ENCODE measurements at regions of chr19 and their contacts with region 1.

Region 1: DNA sequence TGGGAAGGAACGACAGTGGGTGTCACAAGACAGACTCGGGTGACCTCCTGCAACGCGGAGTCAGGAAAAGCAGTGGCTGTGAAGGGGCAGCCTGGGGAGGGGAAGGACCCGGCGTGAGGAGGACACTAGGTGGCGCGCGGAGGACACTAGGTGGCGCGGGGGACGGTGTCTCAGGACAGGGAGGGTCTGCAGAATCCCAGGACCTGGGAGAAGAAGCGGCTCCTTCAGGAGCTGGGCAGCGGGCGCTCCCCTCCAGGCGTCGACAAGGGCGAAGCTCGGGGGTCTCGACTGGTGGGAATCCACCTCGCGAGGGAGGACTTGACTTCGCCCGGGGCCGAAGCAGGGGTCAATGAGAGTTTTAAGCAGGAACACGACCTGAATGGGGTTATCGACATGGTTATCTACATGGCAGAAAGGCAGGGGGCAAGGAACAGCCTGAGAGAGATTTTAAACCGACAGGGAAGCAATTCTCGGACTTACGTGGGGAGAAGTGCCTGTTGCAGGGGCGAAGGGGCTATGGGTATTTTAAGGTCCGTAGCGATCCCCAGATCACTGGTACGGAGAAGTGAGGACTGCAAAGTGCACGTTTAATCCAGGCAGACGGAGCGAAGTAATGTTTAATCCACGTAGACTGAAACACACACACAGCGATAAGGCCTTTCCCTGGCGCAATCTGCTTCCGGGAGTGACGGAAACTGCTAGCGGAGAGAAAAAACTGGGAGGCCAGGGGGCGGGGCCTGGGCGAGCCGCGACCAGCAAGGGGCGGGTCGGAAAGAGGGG is at the start of gene ZNF616:
- DNase-seq: peak; percentile 98 to 99 (median 98)
- ATAC-seq: peak; percentile 99
- H3K4me3 ChIP-seq: peak within 1 kb of the TSS; percentile 34
- H3K4me1 ChIP-seq: peaks cover 14% of the 10 kb centered on the region
- CTCF ChIP-seq: peak; percentile 57
- total RNA-seq, gene ZNF616: 5.5 to 13.4 (median 11.1) TPM

Region 2: GRCh38 chr19:51887522-51888498 is 251.6 kb before region 1 on chr19 and contains the start of gene ZNF577:
- intact Hi-C with region 1: no loop called
- DNase-seq: peak; percentile 90 to 96 (median 91)
- ATAC-seq: peak; percentile 100
- H3K4me3 ChIP-seq: peak within 1 kb of the TSS; percentile 54
- H3K4me1 ChIP-seq: no peaks in the 10 kb centered on the region
- CTCF ChIP-seq: no peak
- total RNA-seq, gene ZNF577: 5.8 to 17.2 (median 9.7) TPM

Region 3: GRCh38 chr19:52200044-52200443 is 60.6 kb after region 1 on chr19:
- intact Hi-C with region 1: no loop called
- DNase-seq: no peak
- ATAC-seq: peak; percentile 29
- H3K4me3 ChIP-seq: no peak overlapping the region
- H3K4me1 ChIP-seq: peaks cover 7% of the 10 kb centered on the region
- CTCF ChIP-seq: no peak

Region 4: DNA sequence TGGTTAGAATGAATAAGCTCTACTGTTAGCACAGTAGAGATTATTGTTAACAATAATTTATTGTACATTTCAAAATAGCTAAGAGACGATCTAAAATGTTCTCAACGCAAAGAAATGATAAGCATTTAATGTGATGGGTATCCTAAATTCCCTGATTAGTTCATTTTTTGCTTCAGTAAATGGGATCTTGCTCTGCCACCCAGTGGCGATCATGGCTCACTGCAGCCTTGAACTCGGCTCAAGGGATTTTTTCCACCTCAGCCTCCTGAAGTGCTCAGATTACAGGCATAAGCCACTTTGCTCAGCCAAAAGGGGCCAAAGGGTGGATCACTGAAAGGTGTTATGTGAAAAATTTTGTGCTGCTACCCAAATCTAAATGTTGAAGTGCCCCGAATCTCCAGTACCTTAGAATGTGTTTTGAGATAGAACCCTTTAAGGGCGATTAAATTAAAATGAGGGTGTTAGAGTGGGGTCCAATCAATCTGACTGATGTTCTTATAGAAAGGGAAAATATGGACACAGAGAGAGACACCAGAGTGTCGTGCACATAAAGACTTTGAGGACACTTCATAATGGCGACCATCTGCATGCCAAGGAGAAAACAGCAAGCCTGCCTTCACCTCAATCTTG is 98.4 kb after region 1 on chr19:
- intact Hi-C with region 1: loop called (anchors 2 to 10 kb)
- DNase-seq: peak in 2 of 3 donors; percentile 59 to 70
- ATAC-seq: peak; percentile 91
- H3K4me3 ChIP-seq: no peak overlapping the region
- H3K4me1 ChIP-seq: no peaks in the 10 kb centered on the region
- CTCF ChIP-seq: peak; percentile 74